HepG2 (cell line): ENCODE measurements at regions of chr10 and their contacts with region 1.

Region 1: GRCh38 chr10:45433716-45434469 is 59.9 kb downstream of the ALOX5 start:
- DNase-seq: no peak
- ATAC-seq: peak; percentile 41; the same call in 2 of the 3 replicates
- H3K4me3 ChIP-seq: no peak overlapping the region
- H3K27ac ChIP-seq: no peak overlapping the region
- H3K4me1 ChIP-seq: peaks cover 42% of the 10 kb centered on the region
- H3K27me3 ChIP-seq: peaks cover 0 to 26% of the 10 kb centered on the region in 2 experiments; a peak in 2 of 5 replicates
- CTCF ChIP-seq: no peak
- EP300 ChIP-seq: no peak
- POLR2A ChIP-seq: no peak
- RAD21 ChIP-seq: no peak

Region 2: GRCh38 chr10:45180946-45181875 is 252.7 kb before region 1 on chr10:
- CTCF ChIA-PET with region 1: no interaction called
- POLR2A ChIA-PET with region 1: no interaction called
- in situ Hi-C with region 1: no loop called
- intact Hi-C with region 1: no loop called
- DNase-seq: no peak
- ATAC-seq: no peak
- H3K4me3 ChIP-seq: no peak overlapping the region
- H3K27ac ChIP-seq: no peak overlapping the region
- H3K4me1 ChIP-seq: no peaks in the 10 kb centered on the region
- H3K27me3 ChIP-seq: peaks cover 0 to 11% of the 10 kb centered on the region in 2 experiments; a peak in 3 of 5 replicates
- CTCF ChIP-seq: no peak
- EP300 ChIP-seq: no peak
- POLR2A ChIP-seq: no peak
- RAD21 ChIP-seq: no peak

Region 3: DNA sequence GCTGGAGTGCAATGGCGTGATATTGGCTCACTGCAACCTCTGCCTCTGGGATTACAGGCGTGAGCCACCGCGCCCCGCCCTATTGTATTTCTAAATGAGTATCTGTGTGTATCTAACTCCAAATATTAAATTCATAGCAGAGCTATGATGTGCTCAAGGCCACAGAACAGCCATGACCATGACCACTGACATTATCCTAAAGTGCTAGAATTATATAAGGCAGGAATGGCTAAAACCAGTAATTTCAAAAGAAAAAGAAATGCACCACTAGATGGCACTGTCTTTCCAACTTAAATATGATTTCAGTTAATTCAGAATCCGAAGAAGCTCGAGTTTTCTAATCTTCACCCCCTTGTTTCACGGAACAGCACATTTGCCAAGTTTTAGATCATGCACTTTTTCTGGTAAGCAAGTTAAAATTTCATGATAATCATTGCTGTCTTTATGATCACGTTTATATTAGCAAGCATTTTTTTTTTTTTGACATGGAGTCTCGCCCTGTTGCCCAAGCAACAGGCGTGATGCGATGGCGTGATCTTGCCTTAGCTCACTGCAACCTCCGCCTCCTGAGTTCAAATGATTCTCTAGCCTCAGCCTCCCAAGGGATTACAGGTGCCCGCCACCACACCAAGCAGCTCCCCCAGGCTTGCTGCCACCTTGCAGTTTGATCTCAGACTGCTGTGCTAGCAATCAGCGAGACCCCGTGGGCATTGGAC is 183.8 kb before region 1 on chr10:
- CTCF ChIA-PET with region 1: no interaction called
- POLR2A ChIA-PET with region 1: no interaction called
- in situ Hi-C with region 1: no loop called
- intact Hi-C with region 1: loop called (anchors 10 kb)
- DNase-seq: peak; percentile 53
- ATAC-seq: peak; percentile 35; the same call in 2 of the 3 replicates
- H3K4me3 ChIP-seq: no peak overlapping the region
- H3K27ac ChIP-seq: no peak overlapping the region
- H3K4me1 ChIP-seq: peaks cover 8% of the 10 kb centered on the region; the same call in 1 of the 2 replicates
- H3K27me3 ChIP-seq: no peaks in the 10 kb centered on the region
- CTCF ChIP-seq: peak; percentile 62
- EP300 ChIP-seq: no peak
- POLR2A ChIP-seq: no peak
- RAD21 ChIP-seq: no peak

Region 4: GRCh38 chr10:45514291-45515270 is 80.7 kb after region 1 on chr10:
- CTCF ChIA-PET with region 1: no interaction called
- POLR2A ChIA-PET with region 1: no interaction called
- in situ Hi-C with region 1: no loop called
- intact Hi-C with region 1: no loop called
- DNase-seq: peak; percentile 10
- ATAC-seq: no peak
- H3K4me3 ChIP-seq: no peak overlapping the region
- H3K27ac ChIP-seq: no peak overlapping the region
- H3K4me1 ChIP-seq: peaks cover 28% of the 10 kb centered on the region
- H3K27me3 ChIP-seq: no peaks in the 10 kb centered on the region
- CTCF ChIP-seq: no peak
- EP300 ChIP-seq: no peak
- POLR2A ChIP-seq: no peak
- RAD21 ChIP-seq: no peak